ENCODE measurements at regions of chr18 and their contacts with region 1.

Region 1: GRCh38 chr18:34661464-34662111 is 48.5 kb upstream of the DTNA start:
- DNase-seq: peak in 1 of 7 donors; percentile 21
- H3K4me3 ChIP-seq: no peak overlapping the region
- H3K27ac ChIP-seq: peak overlapping the region in 1 of 5 donors; percentile 87
- H3K4me1 ChIP-seq: peaks cover 17 to 27% of the 10 kb centered on the region in 2 donors
- H3K27me3 ChIP-seq: no peaks in the 10 kb centered on the region
- CTCF ChIP-seq: peak; percentile 69 to 88 (median 80)
- POLR2A ChIP-seq: no peak

Region 2: DNA sequence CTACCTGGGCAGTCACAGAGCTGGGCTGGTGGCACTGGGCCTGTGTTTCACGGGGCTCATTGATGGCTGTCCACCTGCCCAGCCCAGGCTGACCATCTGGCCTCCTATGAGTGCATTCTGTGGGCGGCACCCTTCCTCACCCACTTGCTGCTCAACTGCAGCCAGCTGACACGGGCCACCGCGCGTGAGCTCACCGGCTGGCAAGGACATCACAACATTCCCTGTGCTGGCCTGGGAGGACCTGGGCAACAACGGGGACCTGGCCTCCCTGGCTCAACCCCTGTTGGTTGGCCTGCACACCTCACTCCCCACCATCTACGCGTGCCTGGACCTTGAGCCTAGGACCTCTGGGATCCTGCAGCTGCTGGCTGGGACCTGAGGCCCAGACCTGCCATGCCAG is 49.7 kb before region 1 on chr18:
- intact Hi-C with region 1: no loop called
- DNase-seq: no peak
- H3K4me3 ChIP-seq: no peak overlapping the region
- H3K27ac ChIP-seq: no peak overlapping the region
- H3K4me1 ChIP-seq: no peaks in the 10 kb centered on the region
- H3K27me3 ChIP-seq: no peaks in the 10 kb centered on the region
- CTCF ChIP-seq: no peak
- POLR2A ChIP-seq: no peak

Region 3: DNA sequence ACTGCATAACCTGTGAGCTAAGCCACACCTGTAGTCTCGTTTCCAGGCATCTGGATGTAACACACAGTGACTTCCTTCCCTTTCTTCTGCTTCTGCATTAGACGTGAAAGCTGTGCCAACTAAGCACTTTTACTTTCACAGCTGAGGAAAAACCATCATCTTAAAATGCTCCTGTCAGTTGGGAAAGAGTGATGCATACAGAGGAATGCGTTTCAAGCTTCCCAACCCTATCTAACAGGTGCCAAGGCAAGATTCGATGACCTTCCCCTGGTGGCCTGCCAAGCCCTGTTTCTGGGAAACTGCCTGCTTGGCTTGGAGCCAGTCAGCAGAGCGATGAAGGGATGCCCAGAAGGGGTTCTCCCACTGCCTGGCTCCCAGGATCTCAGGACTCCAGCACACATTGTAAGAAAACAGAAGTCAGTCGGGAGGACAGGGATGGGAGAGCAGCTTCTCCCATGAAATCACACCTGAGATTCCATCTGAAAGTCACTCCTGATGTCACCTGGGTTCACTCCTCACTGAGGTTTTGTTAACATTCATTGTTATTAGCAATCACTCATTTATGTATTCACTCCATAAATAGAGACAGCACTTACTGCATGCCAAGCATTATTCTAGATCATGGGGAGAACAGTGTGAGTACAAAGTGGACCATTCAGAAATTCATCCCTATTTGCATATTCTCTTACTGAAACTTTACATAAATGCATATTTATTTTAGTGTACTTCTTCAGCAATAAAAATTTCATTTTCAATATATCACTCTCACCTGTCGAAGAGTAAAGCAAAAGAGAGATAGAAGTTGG is 112.6 kb after region 1 on chr18:
- intact Hi-C with region 1: loop called in 1 of 2 experiments (anchors 10 kb)
- DNase-seq: peak; percentile 21 to 80 (median 69)
- H3K4me3 ChIP-seq: no peak overlapping the region
- H3K27ac ChIP-seq: no peak overlapping the region
- H3K4me1 ChIP-seq: peaks cover 0 to 18% of the 10 kb centered on the region in 2 donors
- H3K27me3 ChIP-seq: no peaks in the 10 kb centered on the region
- CTCF ChIP-seq: no peak
- POLR2A ChIP-seq: no peak

Region 4: DNA sequence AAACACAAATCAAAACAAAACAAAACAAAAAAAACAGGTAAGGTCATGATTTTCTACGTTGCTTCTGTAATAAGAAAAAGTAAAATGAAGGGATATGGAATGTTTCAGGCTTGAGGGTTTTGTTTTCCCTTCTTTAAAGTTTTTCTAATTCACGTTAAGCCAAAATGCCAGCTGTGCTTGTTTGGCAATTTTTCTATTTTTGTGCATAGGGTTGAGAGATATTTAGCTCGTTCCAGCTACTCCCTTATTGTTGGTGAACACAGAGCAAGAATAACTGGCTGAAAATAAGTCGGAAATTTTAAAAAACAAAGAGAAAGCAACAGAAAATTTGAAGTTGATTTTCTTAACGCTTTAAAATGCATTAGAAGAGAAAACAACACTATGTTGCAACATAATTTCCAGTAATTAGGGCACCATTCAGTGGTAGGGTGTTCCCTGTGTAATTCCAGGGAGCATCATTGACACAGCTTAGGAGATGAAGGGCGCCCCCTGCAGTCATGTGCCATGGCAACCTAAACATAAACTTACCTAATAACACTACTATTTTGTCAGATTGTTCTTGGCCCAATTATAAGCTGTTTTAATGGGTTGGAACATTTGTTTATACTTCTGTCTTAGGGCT is 148.0 kb after region 1 on chr18:
- intact Hi-C with region 1: no loop called
- DNase-seq: peak in 6 of 7 donors; percentile 23 to 58 (median 38)
- H3K4me3 ChIP-seq: no peak overlapping the region
- H3K27ac ChIP-seq: no peak overlapping the region
- H3K4me1 ChIP-seq: no peaks in the 10 kb centered on the region
- H3K27me3 ChIP-seq: no peaks in the 10 kb centered on the region
- CTCF ChIP-seq: peak in 4 of 6 experiments; percentile 14 to 37 (median 31)
- POLR2A ChIP-seq: no peak

Measured in adrenal gland (tissue), 19 donors.